Mammary epithelial cell (primary cell): ENCODE measurements at regions of chr3 and their contacts with region 1.

Region 1: GRCh38 chr3:143070977-143071551 is 48.5 kb upstream of the CHST2 start:
- DNase-seq: peak; percentile 79
- H3K4me3 ChIP-seq: no peak overlapping the region
- H3K27ac ChIP-seq: peak overlapping the region; percentile 52
- H3K4me1 ChIP-seq: peaks cover 16% of the 10 kb centered on the region
- H3K27me3 ChIP-seq: no peaks in the 10 kb centered on the region
- CTCF ChIP-seq: peak; percentile 12 to 18

Region 2: GRCh38 chr3:143031327-143031726 is 39.7 kb before region 1 on chr3:
- CTCF ChIA-PET with region 1: no interaction called
- dilution Hi-C with region 1: no loop called
- in situ Hi-C with region 1: no loop called
- intact Hi-C with region 1: no loop called
- DNase-seq: no peak
- H3K4me3 ChIP-seq: no peak overlapping the region
- H3K27ac ChIP-seq: no peak overlapping the region
- H3K4me1 ChIP-seq: no peaks in the 10 kb centered on the region
- H3K27me3 ChIP-seq: no peaks in the 10 kb centered on the region
- CTCF ChIP-seq: no peak

Region 3: DNA sequence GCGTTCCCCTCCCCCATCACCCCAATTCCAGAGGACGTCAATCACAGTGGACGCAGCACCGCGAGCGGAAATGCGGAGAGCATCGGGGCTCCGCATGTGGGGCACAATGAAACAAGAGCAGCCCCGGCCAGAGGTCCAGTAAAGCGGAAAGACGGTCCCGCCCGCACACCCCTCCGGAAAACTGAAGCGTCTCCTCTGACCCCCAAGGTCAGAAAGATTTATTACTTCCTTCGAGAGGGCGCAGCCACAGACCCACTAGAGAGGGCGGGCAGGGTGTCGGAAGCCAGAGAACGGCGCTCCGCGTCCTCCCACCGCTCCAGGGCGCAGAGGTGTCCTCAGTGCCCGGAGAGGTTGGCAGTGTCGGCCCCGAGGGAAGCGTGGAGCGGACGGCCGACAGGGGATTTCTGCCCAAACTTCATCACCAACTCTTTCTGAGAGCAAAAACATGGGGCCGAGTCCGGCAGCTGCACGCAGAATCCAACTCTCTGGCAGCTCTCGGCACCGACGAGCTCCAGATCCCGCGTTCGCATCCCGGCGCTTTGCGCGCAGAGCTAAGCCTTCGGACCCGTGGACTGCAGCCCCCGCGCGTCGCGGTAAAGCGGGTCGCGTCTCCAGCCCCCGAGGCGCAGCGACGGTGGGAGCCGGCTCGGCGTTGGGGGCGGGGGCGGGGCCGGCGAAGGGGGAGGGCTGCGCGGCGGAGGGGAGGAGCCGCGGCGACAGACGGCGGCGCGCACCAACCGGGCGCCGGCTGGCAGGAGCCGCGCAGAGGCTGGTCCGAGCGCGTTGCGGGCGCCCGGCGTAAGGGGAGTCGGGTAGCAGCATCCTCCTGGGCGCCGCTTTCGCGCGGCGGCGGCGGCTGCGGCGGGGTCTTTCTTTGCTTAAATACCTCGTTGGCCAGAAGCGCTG is 48.2 kb after region 1 on chr3 and contains the start of gene CHST2:
- CTCF ChIA-PET with region 1: no interaction called
- dilution Hi-C with region 1: no loop called
- in situ Hi-C with region 1: no loop called
- intact Hi-C with region 1: loop called (anchors 1 kb)
- DNase-seq: peak; percentile 81
- H3K4me3 ChIP-seq: peak within 1 kb of the TSS; percentile 78 to 81 (median 80)
- H3K27ac ChIP-seq: no peak within 1 kb of the TSS
- H3K4me1 ChIP-seq: peaks cover 11% of the 10 kb centered on the region
- H3K27me3 ChIP-seq: no peaks in the 10 kb centered on the region
- CTCF ChIP-seq: no peak
- total RNA-seq, gene CHST2: 12.4 to 17.0 TPM

Region 4: DNA sequence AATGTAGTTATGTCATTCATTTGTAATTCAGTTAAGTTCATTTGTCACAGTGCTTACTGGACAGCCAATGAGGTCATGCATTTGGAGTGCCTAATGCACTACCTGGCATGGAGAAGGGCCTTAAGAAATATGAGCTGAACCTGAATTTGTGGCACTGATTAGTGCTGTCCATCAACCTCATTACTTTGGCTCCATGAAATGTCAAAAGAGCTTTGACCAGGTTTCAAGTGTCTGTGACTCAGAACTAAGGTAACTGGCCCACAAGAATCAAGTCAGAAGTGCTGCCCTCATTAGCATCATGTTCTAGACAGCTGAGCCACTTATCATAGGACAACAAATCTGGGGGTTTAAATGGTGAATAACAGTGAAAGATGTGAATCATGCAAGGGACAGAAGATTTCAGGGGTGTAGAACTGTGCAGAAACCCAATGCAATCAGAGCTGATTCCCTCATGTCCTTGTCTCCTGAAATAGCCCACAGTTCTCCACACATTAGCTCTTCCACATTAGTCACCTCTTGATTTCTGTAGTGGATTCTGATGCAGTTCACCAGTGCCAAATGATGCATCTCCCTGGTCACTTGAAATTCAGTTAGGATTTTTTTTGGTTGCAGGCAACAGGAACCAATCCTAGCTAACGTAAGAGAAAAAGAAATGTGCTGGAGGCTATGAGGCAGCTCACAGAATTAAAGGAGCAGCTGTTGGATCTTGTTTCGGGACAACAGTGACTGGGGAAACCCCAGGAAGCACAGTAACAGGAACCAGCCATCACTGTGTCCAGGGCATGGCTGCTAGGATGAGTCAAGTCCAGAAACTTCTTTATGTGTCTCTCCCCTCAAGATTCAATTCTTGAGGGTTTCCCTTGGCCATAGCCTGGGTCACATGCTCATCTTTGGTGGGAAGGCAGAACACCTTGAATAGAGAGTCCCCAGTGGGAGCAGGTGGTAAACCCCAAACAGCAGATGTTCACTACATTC is 87.2 kb after region 1 on chr3:
- CTCF ChIA-PET with region 1: no interaction called
- dilution Hi-C with region 1: no loop called
- in situ Hi-C with region 1: no loop called
- intact Hi-C with region 1: no loop called
- DNase-seq: peak; percentile 89
- H3K4me3 ChIP-seq: no peak overlapping the region
- H3K27ac ChIP-seq: no peak overlapping the region
- H3K4me1 ChIP-seq: peaks cover 12% of the 10 kb centered on the region
- H3K27me3 ChIP-seq: no peaks in the 10 kb centered on the region
- CTCF ChIP-seq: no peak

Region 5: DNA sequence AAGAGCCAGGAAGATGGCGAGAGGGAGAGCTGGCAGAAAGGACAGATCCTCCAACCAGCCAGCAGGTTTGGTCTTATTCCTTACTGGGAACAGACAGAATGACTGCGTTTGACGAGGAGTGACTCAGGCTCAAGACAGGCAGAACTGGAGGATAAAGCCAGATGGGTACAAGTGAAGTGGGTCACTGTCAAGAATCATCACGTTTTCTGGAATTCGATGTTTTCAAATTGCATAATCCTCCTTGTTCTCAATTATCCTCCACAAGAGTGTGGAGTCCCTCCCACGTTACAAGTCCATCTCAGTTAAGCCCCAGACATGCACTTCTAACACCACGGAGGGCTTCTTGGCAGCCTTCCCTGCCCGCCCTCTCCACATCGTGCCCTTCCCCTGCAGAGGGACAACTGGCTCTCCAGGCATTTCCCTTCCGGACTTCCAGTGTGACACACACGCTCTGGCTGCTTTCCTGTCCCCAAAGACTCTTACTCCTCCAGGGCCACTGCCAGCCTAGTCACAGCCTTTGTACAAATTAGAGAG is 231.6 kb after region 1 on chr3:
- CTCF ChIA-PET with region 1: no interaction called
- dilution Hi-C with region 1: no loop called
- in situ Hi-C with region 1: no loop called
- intact Hi-C with region 1: loop called (anchors 10 kb)
- DNase-seq: peak; percentile 80
- H3K4me3 ChIP-seq: no peak overlapping the region
- H3K27ac ChIP-seq: no peak overlapping the region
- H3K4me1 ChIP-seq: peaks cover 25% of the 10 kb centered on the region
- H3K27me3 ChIP-seq: no peaks in the 10 kb centered on the region
- CTCF ChIP-seq: peak in 1 of 2 donors; percentile 7

Region 6: GRCh38 chr3:143674100-143674968 is 603.3 kb after region 1 on chr3:
- CTCF ChIA-PET with region 1: interaction called, 5 read pairs
- dilution Hi-C with region 1: no loop called
- in situ Hi-C with region 1: no loop called
- intact Hi-C with region 1: loop called (anchors 1 kb)
- DNase-seq: peak; percentile 59
- H3K4me3 ChIP-seq: no peak overlapping the region
- H3K27ac ChIP-seq: no peak overlapping the region
- H3K4me1 ChIP-seq: peaks cover 3% of the 10 kb centered on the region
- H3K27me3 ChIP-seq: no peaks in the 10 kb centered on the region
- CTCF ChIP-seq: peak; percentile 91 to 95